ENCODE measurements at regions of chr6 and their contacts with region 1.

Region 1: DNA sequence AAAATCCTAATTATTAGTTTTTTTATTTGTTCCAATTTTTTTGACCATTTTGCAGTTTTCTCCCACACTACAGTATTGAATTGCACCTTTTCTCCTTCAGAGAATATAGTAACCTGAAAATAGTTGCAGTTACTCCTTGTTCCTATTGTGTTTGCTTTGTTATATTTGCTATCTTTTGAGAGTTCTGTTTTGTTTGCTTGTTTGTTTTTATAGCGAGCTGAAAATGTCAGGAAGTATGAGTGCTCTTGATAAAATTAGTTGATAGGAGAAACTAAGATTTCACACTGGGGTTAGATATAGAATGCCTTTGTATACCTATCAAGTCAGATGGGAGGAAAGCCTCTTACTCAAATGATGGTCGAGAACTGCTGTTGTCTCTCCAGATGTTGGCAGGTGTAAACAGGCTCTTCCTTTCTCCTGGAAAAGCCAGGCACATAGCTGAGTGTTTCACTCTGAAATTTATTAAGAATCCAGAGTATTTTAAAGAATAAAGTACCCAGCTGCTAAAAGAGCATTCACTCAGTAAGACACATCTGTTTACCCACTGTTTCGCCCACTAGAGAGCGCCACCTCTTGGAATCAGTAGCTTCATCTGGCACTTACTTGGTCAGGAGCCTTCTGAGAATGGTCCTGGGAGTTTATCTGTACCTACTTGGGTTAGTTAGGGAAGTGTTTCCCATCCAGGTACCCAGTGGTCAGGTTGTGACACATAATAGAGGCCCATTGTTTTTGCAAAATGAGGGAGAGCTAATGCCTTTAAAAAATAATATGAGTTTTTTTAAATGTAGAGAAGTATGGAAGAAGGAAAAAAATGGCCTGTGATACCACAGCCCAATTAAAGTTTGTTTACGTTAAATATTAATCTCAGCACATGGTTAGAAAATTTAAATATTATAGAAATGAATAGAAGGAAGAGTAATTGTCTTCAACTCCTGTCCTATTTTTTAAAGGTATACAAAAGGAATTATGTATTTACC is 11.2 kb downstream of the NT5DC1 start:
- H3K4me3 ChIP-seq: no peak overlapping the region
- H3K27ac ChIP-seq: no peak overlapping the region
- H3K4me1 ChIP-seq: no peaks in the 10 kb centered on the region
- CTCF ChIP-seq: 0 out of 2 replicates have a peak, but pooled peaks have one; percentile 25

Region 2: GRCh38 chr6:115932481-115932880 is 179.4 kb before region 1 on chr6:
- CTCF ChIA-PET with region 1: no interaction called
- POLR2A ChIA-PET with region 1: no interaction called
- H3K4me3 ChIP-seq: no peak overlapping the region
- H3K27ac ChIP-seq: no peak overlapping the region
- H3K4me1 ChIP-seq: peaks cover 3% of the 10 kb centered on the region; the same call in 1 of the 2 replicates
- CTCF ChIP-seq: no peak

Region 3: GRCh38 chr6:116010790-116011401 is 100.9 kb before region 1 on chr6:
- CTCF ChIA-PET with region 1: interaction called, 37 read pairs
- POLR2A ChIA-PET with region 1: no interaction called
- H3K4me3 ChIP-seq: no peak overlapping the region
- H3K27ac ChIP-seq: no peak overlapping the region
- H3K4me1 ChIP-seq: peaks cover 2% of the 10 kb centered on the region; the same call in 1 of the 2 replicates
- CTCF ChIP-seq: 0 out of 2 replicates have a peak, but pooled peaks have one; percentile 32

Region 4: DNA sequence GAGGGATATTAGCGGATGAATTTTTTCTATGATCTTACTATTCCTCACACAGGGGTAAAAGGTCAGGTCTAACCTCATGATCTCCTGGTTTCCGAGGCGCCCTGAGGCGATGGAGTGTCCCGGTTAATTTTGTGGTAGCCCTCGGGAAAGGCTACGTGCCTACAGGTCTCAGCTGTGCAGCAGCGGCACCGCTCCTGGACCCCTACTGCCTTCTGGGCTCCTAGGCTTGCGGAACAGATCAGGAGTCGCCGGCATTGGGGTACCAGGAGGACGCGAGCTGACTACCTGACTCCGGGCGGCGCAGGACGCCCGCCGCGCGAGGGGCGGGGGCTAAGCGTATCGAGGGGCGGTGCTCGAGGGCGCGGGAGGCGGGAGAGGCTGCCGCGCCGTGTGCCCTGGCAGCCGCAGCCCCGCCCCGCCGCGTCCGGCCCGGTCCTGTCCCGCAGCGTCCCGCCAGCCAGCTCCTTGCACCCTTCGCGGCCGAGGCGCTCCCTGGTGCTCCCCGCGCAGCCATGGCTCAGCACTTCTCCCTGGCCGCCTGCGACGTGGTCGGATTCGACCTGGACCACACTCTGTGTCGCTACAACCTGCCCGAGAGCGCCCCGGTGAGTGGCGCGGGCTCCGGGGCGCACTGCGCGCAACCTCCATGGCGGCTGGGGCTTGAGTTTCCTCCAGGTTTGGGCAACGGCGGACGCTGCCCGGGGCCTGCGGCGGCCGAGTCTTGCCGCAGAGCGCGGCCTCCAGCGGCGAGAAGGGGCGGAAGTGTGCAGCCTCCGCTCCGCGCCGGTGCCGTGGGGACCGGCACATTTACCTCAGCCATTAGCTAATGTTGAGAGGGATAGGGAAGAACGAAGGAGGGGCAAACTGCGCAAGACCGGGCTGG is 11.2 kb before region 1 on chr6 and contains the start of gene NT5DC1:
- CTCF ChIA-PET with region 1: interaction called, 37 read pairs
- POLR2A ChIA-PET with region 1: interaction called, 10 read pairs
- H3K4me3 ChIP-seq: peak within 1 kb of the TSS; percentile 81
- H3K27ac ChIP-seq: peak within 1 kb of the TSS; percentile 95
- H3K4me1 ChIP-seq: peaks cover 3% of the 10 kb centered on the region; the same call in 1 of the 2 replicates
- CTCF ChIP-seq: peak; percentile 97

Region 5: GRCh38 chr6:116127771-116128493 is 16.1 kb after region 1 on chr6:
- CTCF ChIA-PET with region 1: interaction called, 53 read pairs
- POLR2A ChIA-PET with region 1: no interaction called
- H3K4me3 ChIP-seq: no peak overlapping the region
- H3K27ac ChIP-seq: no peak overlapping the region
- H3K4me1 ChIP-seq: no peaks in the 10 kb centered on the region
- CTCF ChIP-seq: no peak

Region 6: DNA sequence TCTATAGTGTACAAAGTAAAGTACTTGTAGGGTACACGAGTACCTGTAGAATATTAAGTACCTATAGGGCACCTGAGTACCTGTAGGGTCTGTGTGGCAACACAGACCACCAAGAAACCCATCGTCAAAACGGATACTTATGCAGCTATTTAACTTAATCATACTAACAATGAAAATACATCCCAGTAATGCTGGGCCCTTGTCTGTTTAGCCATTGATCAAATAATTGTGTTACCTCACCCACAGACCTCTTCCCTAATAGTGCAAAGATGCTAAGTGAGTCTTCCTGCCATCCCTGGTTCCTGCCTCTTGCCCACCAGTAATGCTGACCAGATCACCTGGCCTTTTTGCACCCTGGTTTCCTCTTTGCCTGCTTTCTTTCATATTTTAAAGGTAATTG is 21.6 kb after region 1 on chr6:
- CTCF ChIA-PET with region 1: interaction called, 39 read pairs
- POLR2A ChIA-PET with region 1: no interaction called
- H3K4me3 ChIP-seq: no peak overlapping the region
- H3K27ac ChIP-seq: no peak overlapping the region
- H3K4me1 ChIP-seq: no peaks in the 10 kb centered on the region
- CTCF ChIP-seq: no peak

Region 7: GRCh38 chr6:116176596-116176995 is 64.8 kb after region 1 on chr6:
- CTCF ChIA-PET with region 1: interaction called, 12 read pairs
- POLR2A ChIA-PET with region 1: no interaction called
- H3K4me3 ChIP-seq: no peak overlapping the region
- H3K27ac ChIP-seq: no peak overlapping the region
- H3K4me1 ChIP-seq: no peaks in the 10 kb centered on the region
- CTCF ChIP-seq: no peak